ENCODE measurements at regions of chr10 and their contacts with region 1.

Region 1: GRCh38 chr10:114103284-114103683 is 59.6 kb downstream of the ADRB1 start:
- DNase-seq: peak; percentile 78
- H3K4me3 ChIP-seq: no peak overlapping the region
- H3K27ac ChIP-seq: no peak overlapping the region
- H3K4me1 ChIP-seq: no peaks in the 10 kb centered on the region
- H3K27me3 ChIP-seq: peaks cover 24% of the 10 kb centered on the region

Region 2: DNA sequence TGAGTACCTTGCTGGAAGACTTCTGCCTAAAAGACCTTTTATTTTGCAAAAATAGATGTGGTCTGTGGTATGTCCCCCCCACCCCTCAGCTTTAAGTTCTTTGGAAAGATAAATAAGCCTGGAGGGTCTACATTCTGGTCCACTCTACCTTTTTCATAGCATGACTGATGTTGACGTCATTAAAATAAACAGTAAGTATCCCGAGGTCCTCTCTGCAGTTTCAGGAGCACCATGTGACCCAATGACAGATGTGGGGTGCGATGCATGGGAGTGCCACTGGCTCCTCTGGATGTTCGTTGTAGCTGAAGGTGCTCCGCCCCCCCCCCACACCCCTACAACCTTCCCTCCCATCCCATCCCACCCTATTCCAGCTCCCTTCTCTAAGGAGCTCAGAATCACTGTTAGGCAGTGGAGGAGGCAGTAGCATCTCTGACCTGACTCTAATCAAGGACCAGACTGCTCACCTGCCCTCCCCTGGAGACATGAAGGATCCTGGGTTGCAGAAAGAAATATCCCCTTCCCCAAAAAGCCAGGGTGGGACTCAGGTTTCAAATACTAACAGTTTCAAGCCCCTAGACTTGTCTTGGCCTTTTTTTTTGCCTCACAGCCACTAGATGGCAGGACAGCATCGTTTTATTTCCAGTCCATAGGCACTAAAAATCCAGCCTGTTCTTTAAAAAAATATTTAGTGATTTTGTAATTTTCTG is 398.5 kb before region 1 on chr10:
- in situ Hi-C with region 1: loop called (anchors 10 kb)
- DNase-seq: peak; percentile 67
- H3K4me3 ChIP-seq: no peak overlapping the region
- H3K27ac ChIP-seq: no peak overlapping the region
- H3K4me1 ChIP-seq: peaks cover 12% of the 10 kb centered on the region
- H3K27me3 ChIP-seq: no peaks in the 10 kb centered on the region

Region 3: GRCh38 chr10:113791691-113792090 is 311.6 kb before region 1 on chr10:
- in situ Hi-C with region 1: loop called (anchors 10 kb)
- DNase-seq: no peak
- H3K4me3 ChIP-seq: no peak overlapping the region
- H3K27ac ChIP-seq: no peak overlapping the region
- H3K4me1 ChIP-seq: peaks cover 4% of the 10 kb centered on the region; the same call in 1 of the 2 replicates
- H3K27me3 ChIP-seq: peaks cover 45% of the 10 kb centered on the region

Measured in GM23248 (cell line).